Activated CD4-positive, alpha-beta memory T cell treated with anti-CD3 and anti-CD28 coated beads, Interleukin-2, amount 10 ng/mL, durations not matched to agents 7 days and 5 days (primary cell): ENCODE measurements at regions of chr2 and their contacts with region 1.

Region 1: GRCh38 chr2:175251425-175252041 is 70.0 kb upstream of the ATP5MC3 start:
- DNase-seq: no peak
- H3K4me3 Mint-ChIP-seq: no peak overlapping the region
- H3K27ac Mint-ChIP-seq: no peak overlapping the region
- H3K4me1 Mint-ChIP-seq: peaks cover 1% of the 10 kb centered on the region
- H3K27me3 Mint-ChIP-seq: peaks cover 32% of the 10 kb centered on the region

Region 2: GRCh38 chr2:175203621-175204496 is 47.7 kb before region 1 on chr2:
- CTCF ChIA-PET with region 1: interaction called, 18 read pairs
- POLR2A ChIA-PET with region 1: no interaction called
- DNase-seq: peak; percentile 57
- H3K4me3 Mint-ChIP-seq: no peak overlapping the region
- H3K27ac Mint-ChIP-seq: no peak overlapping the region
- H3K4me1 Mint-ChIP-seq: no peaks in the 10 kb centered on the region
- H3K27me3 Mint-ChIP-seq: peaks cover 20% of the 10 kb centered on the region

Region 3: GRCh38 chr2:175234153-175234552 is 17.4 kb before region 1 on chr2:
- CTCF ChIA-PET with region 1: interaction called, 10 read pairs
- POLR2A ChIA-PET with region 1: no interaction called
- DNase-seq: no peak
- H3K4me3 Mint-ChIP-seq: no peak overlapping the region
- H3K27ac Mint-ChIP-seq: no peak overlapping the region
- H3K4me1 Mint-ChIP-seq: peaks cover 2% of the 10 kb centered on the region
- H3K27me3 Mint-ChIP-seq: peaks cover 3% of the 10 kb centered on the region

Region 4: GRCh38 chr2:175304541-175304940 is 53.0 kb after region 1 on chr2:
- CTCF ChIA-PET with region 1: no interaction called
- POLR2A ChIA-PET with region 1: no interaction called
- DNase-seq: no peak
- H3K4me3 Mint-ChIP-seq: no peak overlapping the region
- H3K27ac Mint-ChIP-seq: no peak overlapping the region
- H3K4me1 Mint-ChIP-seq: no peaks in the 10 kb centered on the region
- H3K27me3 Mint-ChIP-seq: peaks cover 30% of the 10 kb centered on the region